ENCODE measurements at regions of chr17 and their contacts with region 1.

Region 1: GRCh38 chr17:42677008-42677857 is 439 bp upstream of the PLEKHH3 start:
- DNase-seq: peak; percentile 99 to 100
- H3K4me3 ChIP-seq: peak overlapping the region; percentile 77 to 94
- H3K27ac ChIP-seq: peak overlapping the region; percentile 94 to 95
- H3K4me1 ChIP-seq: peaks cover 36 to 52% of the 10 kb centered on the region in 2 donors
- H3K27me3 ChIP-seq: no peaks in the 10 kb centered on the region
- CTCF ChIP-seq: no peak

Region 2: GRCh38 chr17:42517516-42517915 is 159.7 kb before region 1 on chr17:
- intact Hi-C with region 1: loop called (anchors 5 kb)
- DNase-seq: peak; percentile 70 to 95
- H3K4me3 ChIP-seq: no peak overlapping the region
- H3K27ac ChIP-seq: peak overlapping the region; percentile 96 to 97
- H3K4me1 ChIP-seq: peaks cover 53 to 76% of the 10 kb centered on the region in 2 donors
- H3K27me3 ChIP-seq: no peaks in the 10 kb centered on the region
- CTCF ChIP-seq: peak; percentile 95 to 96 (median 95)

Region 3: GRCh38 chr17:42577532-42578281 is 99.5 kb before region 1 on chr17 and contains the start of gene PSMC3IP:
- intact Hi-C with region 1: loop called (anchors 1 kb)
- DNase-seq: peak; percentile 84 to 97
- H3K4me3 ChIP-seq: peak within 1 kb of the TSS; percentile 68 to 76
- H3K27ac ChIP-seq: peak within 1 kb of the TSS; percentile 78 to 83
- H3K4me1 ChIP-seq: peaks cover 5 to 12% of the 10 kb centered on the region in 2 donors
- H3K27me3 ChIP-seq: no peaks in the 10 kb centered on the region
- CTCF ChIP-seq: peak in 1 of 3 experiments; percentile 22
- total RNA-seq, gene PSMC3IP: 2.9 TPM

Region 4: DNA sequence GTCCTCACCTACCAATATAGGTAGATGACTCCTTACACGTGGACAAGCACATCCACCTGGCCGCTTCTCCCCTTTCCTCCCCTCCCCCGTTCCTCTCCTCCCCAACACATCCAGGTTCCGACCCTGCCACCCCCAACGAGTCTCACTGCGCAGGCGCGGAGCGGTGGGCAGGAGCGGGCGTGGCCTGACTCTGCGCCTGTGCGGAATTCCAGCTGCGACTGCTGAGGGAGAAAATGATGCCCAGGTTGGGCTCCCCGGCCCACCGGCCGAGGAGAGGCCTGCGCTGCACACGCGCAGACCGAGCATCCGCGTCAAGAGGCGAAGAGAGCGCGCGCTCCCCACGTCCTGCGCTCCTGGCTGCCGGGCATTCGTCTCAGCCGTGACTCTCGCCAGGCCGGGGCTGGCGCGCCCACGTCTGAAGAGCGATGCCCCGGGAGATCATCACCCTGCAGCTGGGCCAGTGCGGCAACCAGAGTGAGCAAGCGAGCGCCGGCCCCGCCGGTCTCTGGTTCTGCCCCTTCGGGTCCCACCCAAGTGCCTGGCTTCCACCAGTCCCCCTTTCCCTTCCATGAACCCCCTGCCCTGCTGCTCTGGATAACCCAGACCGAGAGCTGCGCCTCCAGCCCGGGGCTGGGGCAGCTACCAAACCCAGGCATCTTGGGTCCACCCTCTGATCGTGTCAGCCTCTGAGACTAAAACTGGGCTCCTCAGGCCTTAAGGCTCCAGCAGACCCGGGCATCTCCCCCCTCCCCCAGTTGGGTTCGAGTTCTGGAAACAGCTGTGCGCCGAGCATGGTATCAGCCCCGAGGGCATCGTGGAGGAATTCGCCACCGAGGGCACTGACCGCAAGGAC is 17.9 kb before region 1 on chr17 and contains the start of gene TUBG2:
- intact Hi-C with region 1: loop called (anchors 1 kb)
- DNase-seq: peak in 1 of 2 donors; percentile 91
- H3K4me3 ChIP-seq: peak within 1 kb of the TSS; percentile 49 to 85
- H3K27ac ChIP-seq: peak within 1 kb of the TSS; percentile 71 to 91
- H3K4me1 ChIP-seq: peaks cover 9 to 13% of the 10 kb centered on the region in 2 donors
- H3K27me3 ChIP-seq: no peaks in the 10 kb centered on the region
- CTCF ChIP-seq: no peak
- total RNA-seq, gene TUBG2: 73.1 TPM

Region 5: DNA sequence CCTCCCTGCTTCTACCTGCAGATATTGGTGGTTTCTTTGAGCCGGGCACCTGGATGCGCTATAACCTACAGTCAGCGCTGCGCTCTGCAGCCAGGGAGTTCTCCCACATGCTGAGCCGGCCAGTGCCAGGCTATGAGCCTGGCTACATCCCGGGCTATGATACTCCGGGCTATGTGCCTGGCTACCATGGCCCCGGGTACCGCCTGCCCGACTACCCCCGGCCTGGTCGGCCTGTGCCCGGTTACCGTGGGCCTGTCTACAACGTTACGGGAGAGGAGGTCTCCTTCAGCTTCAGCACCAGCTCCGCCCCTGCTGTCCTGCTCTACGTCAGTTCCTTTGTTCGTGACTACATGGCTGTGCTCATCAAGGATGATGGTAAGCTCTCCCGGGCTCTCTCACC is 18.3 kb after region 1 on chr17:
- intact Hi-C with region 1: no loop called
- DNase-seq: no peak
- H3K4me3 ChIP-seq: no peak overlapping the region
- H3K27ac ChIP-seq: no peak overlapping the region
- H3K4me1 ChIP-seq: no peaks in the 10 kb centered on the region
- H3K27me3 ChIP-seq: no peaks in the 10 kb centered on the region
- CTCF ChIP-seq: no peak

Region 6: DNA sequence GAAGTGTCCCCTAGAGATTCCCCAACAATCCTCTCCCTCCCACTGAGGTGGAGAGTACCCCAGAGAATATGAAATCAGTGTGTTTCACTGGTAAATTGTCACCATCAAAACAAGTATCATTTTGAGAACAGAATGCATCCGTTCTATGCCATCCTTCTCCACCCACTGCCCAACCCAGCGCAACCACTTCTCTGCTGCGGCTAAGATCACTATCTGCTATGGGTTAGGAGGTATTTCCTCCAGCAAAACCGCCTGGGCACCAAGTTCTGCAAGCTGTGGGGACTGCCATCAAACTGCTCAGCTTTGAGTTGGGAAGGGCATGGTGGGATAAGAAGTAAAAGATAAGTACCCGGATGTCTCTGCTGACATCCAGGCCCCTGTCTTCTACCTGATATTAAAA is 29.5 kb after region 1 on chr17:
- intact Hi-C with region 1: no loop called
- DNase-seq: no peak
- H3K4me3 ChIP-seq: no peak overlapping the region
- H3K27ac ChIP-seq: no peak overlapping the region
- H3K4me1 ChIP-seq: no peaks in the 10 kb centered on the region
- H3K27me3 ChIP-seq: no peaks in the 10 kb centered on the region
- CTCF ChIP-seq: no peak